Body of pancreas (tissue), 4 donors: ENCODE measurements at regions of chr12 and their contacts with region 1.

Region 1: DNA sequence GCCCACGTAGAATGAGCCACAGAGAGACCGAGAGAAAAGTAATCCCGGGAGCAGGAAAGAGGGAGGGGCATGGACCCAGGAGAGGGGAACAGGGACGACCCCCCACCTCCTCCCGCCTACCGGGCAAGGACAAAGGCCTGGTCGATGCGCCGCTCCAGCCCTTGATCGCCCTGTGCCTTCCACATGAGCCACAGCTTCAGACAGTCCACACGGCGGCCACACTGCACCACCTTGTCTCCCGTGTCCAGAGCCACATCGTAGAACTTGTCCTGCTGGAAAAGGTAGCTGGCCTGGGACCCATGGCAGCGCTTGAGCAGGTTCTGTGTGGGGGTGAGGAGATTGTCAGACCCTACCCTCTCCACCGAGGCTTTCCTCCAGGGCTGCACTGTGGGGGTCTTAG is 20.5 kb upstream of the ZNF740 start:
- DNase-seq: no peak
- ATAC-seq: no peak
- H3K4me3 ChIP-seq: no peak overlapping the region
- H3K27ac ChIP-seq: no peak overlapping the region
- H3K4me1 ChIP-seq: no peaks in the 10 kb centered on the region
- H3K27me3 ChIP-seq: no peaks in the 10 kb centered on the region
- CTCF ChIP-seq: no peak
- POLR2A ChIP-seq: no peak

Region 2: DNA sequence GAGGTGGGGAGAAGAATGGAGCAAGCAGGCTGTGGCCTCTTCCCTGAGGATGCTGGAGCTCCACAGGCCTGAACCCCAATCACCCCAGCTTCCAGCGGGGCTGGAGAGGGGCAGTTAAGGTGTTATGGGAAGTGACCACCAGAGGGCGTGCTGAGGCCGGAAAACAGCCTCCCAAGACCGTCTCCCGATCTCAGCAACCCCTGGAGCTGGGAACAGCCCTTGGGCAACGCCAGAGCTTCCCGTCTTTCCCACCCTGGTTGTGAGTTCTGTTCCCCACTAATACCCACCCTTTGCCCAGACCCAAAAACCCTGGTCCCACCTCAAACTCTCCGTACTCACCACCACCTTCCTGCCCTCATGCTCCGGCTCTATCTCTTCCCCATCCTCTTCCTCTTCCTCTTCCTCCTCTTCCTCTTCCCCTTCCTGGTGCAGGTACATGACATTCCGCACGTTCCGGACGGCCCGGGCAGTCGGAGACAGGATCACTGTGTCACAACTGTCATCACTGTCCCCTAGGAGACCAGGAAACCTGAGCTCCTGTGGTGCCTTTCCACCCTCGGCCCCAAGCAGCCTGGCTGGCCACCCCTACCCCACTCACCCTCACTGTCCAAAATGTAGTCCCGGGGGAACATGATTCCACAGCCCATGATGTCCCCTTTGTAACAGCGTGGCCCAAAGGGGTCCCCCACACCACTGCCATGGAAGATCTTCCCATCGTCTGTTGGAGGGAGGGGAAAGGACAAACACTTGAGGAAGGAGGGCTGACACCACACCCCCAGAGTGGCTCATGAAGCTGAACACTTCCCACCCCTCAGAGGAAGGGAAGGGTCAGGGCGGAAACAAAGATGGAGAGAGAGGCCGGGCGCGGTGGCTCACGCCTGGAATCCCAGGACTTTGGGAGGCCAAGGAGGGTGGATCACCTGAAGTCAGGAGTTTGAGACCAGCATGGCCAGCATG is 93.7 kb before region 1 on chr12:
- intact Hi-C with region 1: no loop called
- DNase-seq: peak; percentile 80 to 84 (median 83)
- ATAC-seq: peak; percentile 63
- H3K4me3 ChIP-seq: no peak overlapping the region
- H3K27ac ChIP-seq: peak overlapping the region in 3 of 4 donors; percentile 20 to 55 (median 45)
- H3K4me1 ChIP-seq: peaks cover 15% of the 10 kb centered on the region
- H3K27me3 ChIP-seq: no peaks in the 10 kb centered on the region
- CTCF ChIP-seq: peak; percentile 75 to 92 (median 86)
- POLR2A ChIP-seq: peak in 1 of 3 donors; percentile 19

Region 3: DNA sequence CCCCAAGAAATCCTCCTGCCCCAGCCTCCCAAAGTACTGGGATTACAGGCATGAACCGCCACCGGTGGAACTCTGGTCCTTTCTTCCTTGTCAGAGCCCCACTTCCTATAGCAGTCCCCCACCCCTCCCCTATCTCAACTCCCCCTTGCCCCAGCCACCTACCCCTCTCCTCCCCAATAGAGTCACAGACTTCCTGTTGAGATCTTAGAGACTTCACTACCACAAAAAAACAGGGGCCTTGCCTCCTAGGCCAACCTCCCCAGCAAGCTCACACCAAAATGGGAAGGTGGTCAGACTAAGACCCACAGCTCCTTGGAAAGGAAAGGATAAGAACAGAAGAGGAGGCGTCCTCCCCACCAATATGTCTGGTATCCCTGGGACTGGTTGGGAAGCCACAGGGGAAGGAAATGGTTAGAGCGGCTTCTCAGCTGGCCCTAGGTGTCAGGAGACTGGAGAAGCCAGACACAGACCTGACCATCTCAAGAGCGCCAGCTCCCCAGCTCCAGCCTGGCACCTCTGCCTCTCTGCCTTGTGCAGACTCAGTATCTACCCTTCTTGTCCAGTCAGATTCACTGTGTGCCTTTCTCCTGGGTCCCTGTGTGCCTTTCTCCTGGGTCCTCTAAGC is 38.6 kb after region 1 on chr12:
- intact Hi-C with region 1: loop called (anchors 5 kb)
- DNase-seq: no peak
- ATAC-seq: no peak
- H3K4me3 ChIP-seq: no peak overlapping the region
- H3K27ac ChIP-seq: no peak overlapping the region
- H3K4me1 ChIP-seq: peaks cover 23% of the 10 kb centered on the region
- H3K27me3 ChIP-seq: no peaks in the 10 kb centered on the region
- CTCF ChIP-seq: no peak
- POLR2A ChIP-seq: no peak